ENCODE measurements at regions of chr13 and their contacts with region 1.

Region 1: DNA sequence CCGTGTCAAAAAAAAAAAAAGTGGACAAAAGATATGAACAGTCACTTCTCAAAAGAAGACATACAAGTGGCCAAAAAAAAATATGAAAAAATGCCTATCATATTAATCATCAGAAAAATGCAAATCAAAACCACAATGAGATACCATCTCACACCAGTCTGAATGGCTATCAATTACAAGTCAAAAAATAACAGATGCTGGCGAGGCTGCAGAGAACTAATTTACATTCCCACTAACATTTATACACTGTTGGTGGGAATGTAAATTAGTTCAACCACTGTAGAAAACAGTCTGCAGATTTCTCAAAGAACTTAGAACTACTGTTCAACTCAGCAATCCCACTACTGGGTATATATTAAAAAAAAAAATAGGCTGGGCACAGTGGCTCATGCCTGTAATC is 26.5 kb upstream of the FOXO1 start:
- DNase-seq: peak; percentile 15
- H3K4me3 ChIP-seq: no peak overlapping the region
- H3K27ac ChIP-seq: peak overlapping the region; percentile 46
- H3K4me1 ChIP-seq: peaks cover 5% of the 10 kb centered on the region
- H3K27me3 ChIP-seq: no peaks in the 10 kb centered on the region
- CTCF ChIP-seq: no peak
- POLR2A ChIP-seq: no peak

Region 2: GRCh38 chr13:40764587-40765403 is 71.8 kb after region 1 on chr13:
- CTCF ChIA-PET with region 1: no interaction called
- POLR2A ChIA-PET with region 1: no interaction called
- dilution Hi-C with region 1: loop called (anchors 10 kb)
- intact Hi-C with region 1: no loop called
- DNase-seq: no peak
- H3K4me3 ChIP-seq: no peak overlapping the region
- H3K27ac ChIP-seq: no peak overlapping the region
- H3K4me1 ChIP-seq: no peaks in the 10 kb centered on the region
- H3K27me3 ChIP-seq: no peaks in the 10 kb centered on the region
- CTCF ChIP-seq: no peak
- POLR2A ChIP-seq: no peak

Region 3: GRCh38 chr13:40897058-40897457 is 204.1 kb after region 1 on chr13:
- CTCF ChIA-PET with region 1: no interaction called
- POLR2A ChIA-PET with region 1: no interaction called
- dilution Hi-C with region 1: no loop called
- intact Hi-C with region 1: no loop called
- DNase-seq: no peak
- H3K4me3 ChIP-seq: no peak overlapping the region
- H3K27ac ChIP-seq: no peak overlapping the region
- H3K4me1 ChIP-seq: no peaks in the 10 kb centered on the region
- H3K27me3 ChIP-seq: no peaks in the 10 kb centered on the region
- CTCF ChIP-seq: no peak
- POLR2A ChIP-seq: no peak

Measured in endothelial cell of umbilical vein (primary cell).